ENCODE measurements at regions of chr10 and their contacts with region 1.

Region 1: GRCh38 chr10:100912605-100913469 is at the start of gene SLF2:
- DNase-seq: peak; percentile 96
- ATAC-seq: peak; percentile 97
- H3K4me3 ChIP-seq: peak within 1 kb of the TSS; percentile 92
- H3K27ac ChIP-seq: peak within 1 kb of the TSS; percentile 84
- H3K4me1 ChIP-seq: no peaks in the 10 kb centered on the region
- H3K27me3 ChIP-seq: no peaks in the 10 kb centered on the region
- CTCF ChIP-seq: no peak
- EP300 ChIP-seq: no peak
- POLR2A ChIP-seq: peak; percentile 92
- RAD21 ChIP-seq: no peak
- polyA plus RNA-seq, gene SLF2: 3.0 to 3.1 TPM

Region 2: GRCh38 chr10:100697070-100697469 is 215.8 kb before region 1 on chr10:
- CTCF ChIA-PET with region 1: no interaction called
- POLR2A ChIA-PET with region 1: no interaction called
- RAD21 ChIA-PET with region 1: no interaction called
- SMC1A ChIA-PET with region 1: no interaction called
- in situ Hi-C with region 1: no loop called
- intact Hi-C with region 1: no loop called
- DNase-seq: no peak
- ATAC-seq: peak; percentile 54
- H3K4me3 ChIP-seq: no peak overlapping the region
- H3K27ac ChIP-seq: no peak overlapping the region
- H3K4me1 ChIP-seq: no peaks in the 10 kb centered on the region
- H3K27me3 ChIP-seq: no peaks in the 10 kb centered on the region; a peak in 2 of 4 replicates
- CTCF ChIP-seq: no peak
- EP300 ChIP-seq: no peak
- POLR2A ChIP-seq: no peak
- RAD21 ChIP-seq: no peak

Region 3: GRCh38 chr10:100848770-100849169 is 64.1 kb before region 1 on chr10:
- CTCF ChIA-PET with region 1: no interaction called
- POLR2A ChIA-PET with region 1: no interaction called
- RAD21 ChIA-PET with region 1: no interaction called
- SMC1A ChIA-PET with region 1: no interaction called
- in situ Hi-C with region 1: no loop called
- intact Hi-C with region 1: no loop called
- DNase-seq: no peak
- ATAC-seq: no peak
- H3K4me3 ChIP-seq: no peak overlapping the region
- H3K27ac ChIP-seq: no peak overlapping the region
- H3K4me1 ChIP-seq: no peaks in the 10 kb centered on the region
- H3K27me3 ChIP-seq: no peaks in the 10 kb centered on the region; a peak in 1 of 4 replicates
- CTCF ChIP-seq: no peak
- EP300 ChIP-seq: no peak
- POLR2A ChIP-seq: no peak
- RAD21 ChIP-seq: no peak

Region 4: GRCh38 chr10:100888796-100889356 is 24.0 kb before region 1 on chr10:
- CTCF ChIA-PET with region 1: interaction called, 11 read pairs
- POLR2A ChIA-PET with region 1: interaction called, 3 read pairs
- RAD21 ChIA-PET with region 1: interaction called, 4 read pairs
- SMC1A ChIA-PET with region 1: interaction called, 4 read pairs
- in situ Hi-C with region 1: no loop called
- intact Hi-C with region 1: no loop called
- DNase-seq: no peak
- ATAC-seq: no peak; the same call in 2 of the 3 replicates
- H3K4me3 ChIP-seq: no peak overlapping the region
- H3K27ac ChIP-seq: no peak overlapping the region
- H3K4me1 ChIP-seq: no peaks in the 10 kb centered on the region
- H3K27me3 ChIP-seq: no peaks in the 10 kb centered on the region; a peak in 1 of 4 replicates
- CTCF ChIP-seq: peak in 2 of 3 experiments; percentile 21 to 34; a peak in 3 of 6 replicates
- EP300 ChIP-seq: no peak
- POLR2A ChIP-seq: no peak
- RAD21 ChIP-seq: peak; percentile 32; the same call in 1 of the 2 replicates

Region 5: DNA sequence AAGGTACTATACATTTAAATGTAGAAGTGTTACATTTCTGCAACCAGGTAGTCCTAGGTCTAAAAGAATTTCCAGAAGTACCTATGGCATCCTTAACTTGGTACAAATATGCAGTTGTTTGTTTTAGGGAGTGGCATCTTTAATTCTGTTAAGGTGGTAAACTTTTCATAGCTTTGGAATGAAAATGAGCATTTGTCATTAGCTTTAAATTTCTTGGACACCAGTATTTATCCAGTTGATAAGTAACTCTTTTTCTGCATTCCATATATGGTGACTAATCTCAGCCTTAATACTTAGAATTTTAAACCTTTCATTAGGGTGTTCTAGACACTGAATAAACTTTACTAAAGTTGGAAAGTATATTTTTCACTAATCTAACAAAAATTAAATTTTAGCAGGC is 10.7 kb after region 1 on chr10:
- CTCF ChIA-PET with region 1: interaction called, 3 read pairs
- POLR2A ChIA-PET with region 1: interaction called, 6 read pairs
- RAD21 ChIA-PET with region 1: interaction called, 5 read pairs
- SMC1A ChIA-PET with region 1: interaction called, 19 read pairs
- in situ Hi-C with region 1: no loop called
- intact Hi-C with region 1: no loop called
- DNase-seq: no peak
- ATAC-seq: no peak
- H3K4me3 ChIP-seq: no peak overlapping the region
- H3K27ac ChIP-seq: no peak overlapping the region
- H3K4me1 ChIP-seq: no peaks in the 10 kb centered on the region
- H3K27me3 ChIP-seq: no peaks in the 10 kb centered on the region
- CTCF ChIP-seq: no peak
- EP300 ChIP-seq: no peak
- POLR2A ChIP-seq: no peak
- RAD21 ChIP-seq: no peak

Measured in GM12878 (cell line).